WTC11 (cell line): ENCODE measurements at regions of chr9 and their contacts with region 1.

Region 1: GRCh38 chr9:127214421-127215267 is 49.9 kb upstream of the GARNL3 start:
- DNase-seq: peak; percentile 77
- ATAC-seq: peak; percentile 47
- H3K4me3 Mint-ChIP-seq: no peak overlapping the region
- H3K27ac Mint-ChIP-seq: no peak overlapping the region
- H3K4me1 Mint-ChIP-seq: peaks cover 24% of the 10 kb centered on the region
- H3K27me3 Mint-ChIP-seq: no peaks in the 10 kb centered on the region
- CTCF ChIP-seq: peak; percentile 64

Region 2: GRCh38 chr9:126932871-126933321 is 281.7 kb before region 1 on chr9:
- CTCF ChIA-PET with region 1: interaction called, 12 read pairs
- POLR2A ChIA-PET with region 1: no interaction called
- DNase-seq: peak; percentile 48
- ATAC-seq: peak; percentile 76
- H3K4me3 Mint-ChIP-seq: no peak overlapping the region
- H3K27ac Mint-ChIP-seq: no peak overlapping the region
- H3K4me1 Mint-ChIP-seq: peaks cover 12% of the 10 kb centered on the region
- H3K27me3 Mint-ChIP-seq: no peaks in the 10 kb centered on the region; the same call in 1 of the 2 replicates
- CTCF ChIP-seq: no peak

Region 3: DNA sequence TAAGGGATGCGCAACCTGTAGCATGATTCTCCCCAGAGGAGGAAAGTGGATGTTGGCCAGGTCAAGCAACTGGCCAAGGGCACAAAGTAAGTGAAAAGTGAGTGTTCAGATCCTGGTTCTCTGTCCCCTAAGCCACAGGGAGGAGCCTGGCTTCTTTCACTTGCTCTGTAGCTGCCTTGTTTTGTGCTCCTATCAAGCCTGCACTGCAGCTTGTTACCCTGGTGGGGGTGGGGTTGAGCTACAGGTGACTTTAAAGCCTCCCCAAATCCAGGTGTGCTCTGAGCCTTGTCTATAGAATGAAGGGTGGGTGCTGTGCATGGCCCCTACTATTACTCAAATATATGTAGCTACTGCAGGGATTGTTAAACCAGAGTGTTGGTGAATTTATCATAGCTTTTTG is 267.1 kb before region 1 on chr9:
- CTCF ChIA-PET with region 1: interaction called, 21 read pairs
- POLR2A ChIA-PET with region 1: no interaction called
- DNase-seq: peak; percentile 54
- ATAC-seq: peak; percentile 100
- H3K4me3 Mint-ChIP-seq: no peak overlapping the region
- H3K27ac Mint-ChIP-seq: peak overlapping the region; percentile 64; the same call in 1 of the 2 replicates
- H3K4me1 Mint-ChIP-seq: peaks cover 10% of the 10 kb centered on the region
- H3K27me3 Mint-ChIP-seq: no peaks in the 10 kb centered on the region; the same call in 1 of the 2 replicates
- CTCF ChIP-seq: no peak; the same call in 1 of the 2 replicates

Region 4: DNA sequence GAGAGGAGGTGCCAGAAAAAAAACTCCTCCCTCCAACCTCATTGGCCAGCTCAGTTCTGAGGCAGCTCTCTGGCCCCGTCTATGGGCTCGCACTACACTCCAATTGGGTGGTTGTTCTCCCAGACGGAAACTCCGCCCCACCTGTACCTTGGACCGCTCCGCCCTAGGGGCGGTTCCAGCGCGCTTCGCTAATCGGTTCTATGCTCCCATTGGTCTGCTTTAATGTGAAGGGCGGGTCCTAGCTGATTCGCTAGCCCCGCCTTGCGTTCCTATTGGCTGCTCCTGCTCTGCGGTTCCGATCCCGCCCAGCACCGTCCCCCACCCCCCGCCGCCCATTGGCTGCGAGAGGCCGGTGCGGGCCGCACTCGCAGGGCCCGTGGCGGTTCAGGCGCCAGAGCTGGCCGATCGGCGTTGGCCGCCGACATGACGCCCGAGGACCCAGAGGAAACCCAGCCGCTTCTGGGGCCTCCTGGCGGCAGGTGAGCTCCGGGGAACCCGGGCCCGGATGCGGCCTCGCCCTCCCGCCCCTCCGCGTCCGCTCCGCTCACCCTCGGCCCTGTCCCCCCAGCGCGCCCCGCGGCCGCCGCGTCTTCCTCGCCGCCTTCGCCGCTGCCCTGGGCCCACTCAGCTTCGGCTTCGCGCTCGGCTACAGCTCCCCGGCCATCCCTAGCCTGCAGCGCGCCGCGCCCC is 182.3 kb after region 1 on chr9 and contains the start of gene SLC2A8:
- CTCF ChIA-PET with region 1: interaction called, 24 read pairs
- POLR2A ChIA-PET with region 1: interaction called, 3 read pairs
- DNase-seq: peak; percentile 99
- ATAC-seq: peak; percentile 97
- H3K4me3 Mint-ChIP-seq: peak within 1 kb of the TSS; percentile 80
- H3K27ac Mint-ChIP-seq: peak within 1 kb of the TSS; percentile 95
- H3K4me1 Mint-ChIP-seq: peaks cover 13% of the 10 kb centered on the region
- H3K27me3 Mint-ChIP-seq: peaks cover 17% of the 10 kb centered on the region
- CTCF ChIP-seq: no peak
- total RNA-seq, gene SLC2A8: 30.2 to 37.4 TPM (median 33.9 TPM) in 3 replicates

Region 5: DNA sequence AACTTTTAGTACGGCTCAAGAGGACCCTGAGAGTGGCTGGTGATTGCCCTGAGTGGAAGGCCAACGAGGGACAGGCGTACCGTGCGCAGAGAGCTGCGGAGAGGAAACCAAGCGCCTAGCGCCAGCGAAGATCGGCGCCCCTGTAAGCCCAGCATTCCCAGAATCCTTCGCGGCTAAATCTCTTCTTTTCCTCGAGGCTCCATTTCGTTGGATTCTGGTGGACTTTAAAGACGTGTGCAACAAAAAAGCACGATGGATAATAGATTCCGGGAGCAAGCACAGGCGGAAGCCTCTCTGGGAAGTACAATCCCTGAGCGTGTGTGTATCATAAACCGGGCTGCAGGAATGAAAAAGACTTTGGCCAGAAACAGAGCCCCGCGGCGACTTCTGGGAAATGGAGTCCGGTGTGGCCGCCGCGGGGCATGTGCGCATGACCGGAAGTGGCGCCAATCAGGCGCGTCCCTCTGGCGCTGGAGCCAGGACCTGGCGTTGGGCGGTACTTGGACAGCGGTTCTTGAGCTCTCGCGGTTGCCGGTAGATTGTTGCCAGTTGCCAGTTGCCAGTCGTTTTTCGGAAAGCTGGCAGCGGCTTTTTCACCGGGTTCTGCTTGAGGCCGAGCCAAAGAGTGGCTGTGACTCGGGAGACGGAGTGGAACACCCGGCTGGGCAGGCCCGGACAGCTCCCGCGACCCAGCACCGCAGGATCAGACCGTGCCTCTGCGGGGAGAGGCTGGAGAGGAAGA is 209.5 kb after region 1 on chr9 and contains the start of gene ZNF79:
- CTCF ChIA-PET with region 1: interaction called, 11 read pairs
- POLR2A ChIA-PET with region 1: no interaction called
- DNase-seq: peak; percentile 95
- ATAC-seq: peak; percentile 90
- H3K4me3 Mint-ChIP-seq: peak within 1 kb of the TSS; percentile 98
- H3K27ac Mint-ChIP-seq: peak within 1 kb of the TSS; percentile 99
- H3K4me1 Mint-ChIP-seq: peaks cover 29% of the 10 kb centered on the region
- H3K27me3 Mint-ChIP-seq: no peaks in the 10 kb centered on the region
- CTCF ChIP-seq: no peak
- total RNA-seq, gene ZNF79: 7.6 to 9.0 TPM (median 7.7 TPM) in 3 replicates